Activated CD4-positive, alpha-beta memory T cell treated with anti-CD3 and anti-CD28 coated beads for 36 hours (primary cell): ENCODE measurements at regions of chrX and their contacts with region 1.

Region 1: DNA sequence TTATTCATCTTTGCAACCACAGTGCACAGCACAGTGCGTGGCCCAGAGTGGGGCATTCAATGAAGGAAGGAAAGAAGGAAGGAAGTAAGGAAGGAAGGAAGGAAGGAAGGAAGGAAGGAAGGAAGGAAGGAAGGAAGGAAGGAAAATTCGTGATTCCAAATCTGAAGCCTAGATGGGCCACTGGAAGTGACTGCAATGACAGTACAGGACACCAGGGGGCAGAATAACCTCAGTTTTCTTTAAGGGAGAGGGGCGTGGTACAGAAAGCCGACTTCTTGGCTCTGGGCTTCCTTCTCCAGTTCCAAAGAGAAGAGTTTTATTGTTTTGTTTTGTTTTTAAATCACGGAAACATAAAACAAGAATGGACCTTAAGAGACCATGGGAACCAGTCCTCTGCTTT is 47.8 kb downstream of the APLN start:
- DNase-seq: peak; percentile 55
- H3K4me3 Mint-ChIP-seq: no peak overlapping the region
- H3K27ac Mint-ChIP-seq: no peak overlapping the region
- H3K4me1 Mint-ChIP-seq: peaks cover 15% of the 10 kb centered on the region
- H3K27me3 Mint-ChIP-seq: no peaks in the 10 kb centered on the region

Region 2: GRCh38 chrX:129622757-129623341 is 15.9 kb after region 1 on chrX:
- CTCF ChIA-PET with region 1: no interaction called
- POLR2A ChIA-PET with region 1: no interaction called
- intact Hi-C with region 1: no loop called
- DNase-seq: no peak
- H3K4me3 Mint-ChIP-seq: no peak overlapping the region
- H3K27ac Mint-ChIP-seq: no peak overlapping the region
- H3K4me1 Mint-ChIP-seq: peaks cover 3% of the 10 kb centered on the region
- H3K27me3 Mint-ChIP-seq: no peaks in the 10 kb centered on the region

Region 3: DNA sequence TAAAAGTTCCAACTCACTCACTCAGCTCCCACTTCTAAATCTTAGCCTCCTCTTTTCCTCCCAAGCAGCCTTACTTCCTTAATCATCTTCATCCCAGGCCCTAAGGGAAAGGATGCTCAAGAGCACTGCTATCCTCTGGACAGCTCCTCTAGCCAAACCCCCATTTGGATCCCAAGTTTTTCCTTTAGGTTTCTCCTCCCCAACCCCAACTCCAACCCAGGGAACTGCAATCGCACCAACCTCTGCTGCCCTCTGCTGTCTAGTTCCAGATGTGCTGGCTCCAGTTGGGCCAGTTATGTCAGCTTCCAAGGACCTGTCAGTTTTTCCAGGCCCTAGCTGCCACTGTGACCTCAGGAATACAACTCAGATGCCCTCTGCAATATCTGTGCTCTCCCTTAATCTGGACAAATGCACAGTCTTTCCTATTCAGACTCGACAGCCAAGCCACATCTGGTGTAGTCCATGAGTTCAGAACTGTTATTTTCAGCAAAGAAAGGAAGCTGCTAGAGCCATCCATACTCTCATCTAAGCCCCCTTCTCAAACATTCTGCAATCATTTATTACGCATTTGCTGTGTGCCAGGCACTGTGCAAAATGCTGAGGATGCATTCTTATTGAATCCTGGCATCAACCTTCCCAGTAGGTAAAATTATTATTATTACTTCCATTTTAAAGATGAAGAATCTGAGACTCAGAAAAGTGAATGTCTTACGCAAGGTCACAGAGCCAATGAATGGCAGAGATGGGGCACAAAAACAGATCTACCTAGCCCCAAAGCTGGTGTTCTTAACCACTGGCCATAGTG is 119.6 kb after region 1 on chrX:
- CTCF ChIA-PET with region 1: interaction called, 12 read pairs
- POLR2A ChIA-PET with region 1: no interaction called
- intact Hi-C with region 1: loop called (anchors 1 kb)
- DNase-seq: peak; percentile 52
- H3K4me3 Mint-ChIP-seq: no peak overlapping the region
- H3K27ac Mint-ChIP-seq: no peak overlapping the region
- H3K4me1 Mint-ChIP-seq: peaks cover 31% of the 10 kb centered on the region
- H3K27me3 Mint-ChIP-seq: no peaks in the 10 kb centered on the region

Region 4: GRCh38 chrX:129823115-129823514 is 216.2 kb after region 1 on chrX:
- CTCF ChIA-PET with region 1: interaction called, 4 read pairs
- POLR2A ChIA-PET with region 1: no interaction called
- intact Hi-C with region 1: loop called (anchors 10 kb)
- DNase-seq: peak; percentile 46
- H3K4me3 Mint-ChIP-seq: no peak overlapping the region
- H3K27ac Mint-ChIP-seq: peak overlapping the region; percentile 81
- H3K4me1 Mint-ChIP-seq: peaks cover 16% of the 10 kb centered on the region
- H3K27me3 Mint-ChIP-seq: no peaks in the 10 kb centered on the region

Region 5: DNA sequence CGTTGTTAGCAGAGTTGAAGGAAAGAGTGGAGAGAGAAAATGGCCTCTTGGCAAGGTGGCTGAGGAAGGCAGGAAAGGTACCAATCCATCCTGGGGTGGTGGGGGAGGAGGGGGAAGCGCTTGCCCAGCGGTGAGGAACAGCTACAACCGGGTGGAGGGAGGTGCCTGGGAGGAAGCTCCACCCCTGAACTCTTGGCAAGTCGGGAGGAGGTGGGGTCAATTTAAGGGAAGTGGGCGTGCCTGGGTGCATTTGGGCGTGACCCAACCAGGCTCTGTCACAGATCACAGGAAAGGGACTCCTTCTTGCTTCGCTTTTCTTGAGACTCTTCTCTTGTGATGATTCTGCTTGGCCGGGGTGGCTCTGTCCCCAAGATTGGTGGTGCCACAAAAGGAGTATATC is 417.2 kb after region 1 on chrX:
- CTCF ChIA-PET with region 1: interaction called, 12 read pairs
- POLR2A ChIA-PET with region 1: no interaction called
- intact Hi-C with region 1: no loop called
- DNase-seq: peak; percentile 89
- H3K4me3 Mint-ChIP-seq: no peak overlapping the region
- H3K27ac Mint-ChIP-seq: peak overlapping the region; percentile 47
- H3K4me1 Mint-ChIP-seq: peaks cover 10% of the 10 kb centered on the region
- H3K27me3 Mint-ChIP-seq: no peaks in the 10 kb centered on the region

Region 6: DNA sequence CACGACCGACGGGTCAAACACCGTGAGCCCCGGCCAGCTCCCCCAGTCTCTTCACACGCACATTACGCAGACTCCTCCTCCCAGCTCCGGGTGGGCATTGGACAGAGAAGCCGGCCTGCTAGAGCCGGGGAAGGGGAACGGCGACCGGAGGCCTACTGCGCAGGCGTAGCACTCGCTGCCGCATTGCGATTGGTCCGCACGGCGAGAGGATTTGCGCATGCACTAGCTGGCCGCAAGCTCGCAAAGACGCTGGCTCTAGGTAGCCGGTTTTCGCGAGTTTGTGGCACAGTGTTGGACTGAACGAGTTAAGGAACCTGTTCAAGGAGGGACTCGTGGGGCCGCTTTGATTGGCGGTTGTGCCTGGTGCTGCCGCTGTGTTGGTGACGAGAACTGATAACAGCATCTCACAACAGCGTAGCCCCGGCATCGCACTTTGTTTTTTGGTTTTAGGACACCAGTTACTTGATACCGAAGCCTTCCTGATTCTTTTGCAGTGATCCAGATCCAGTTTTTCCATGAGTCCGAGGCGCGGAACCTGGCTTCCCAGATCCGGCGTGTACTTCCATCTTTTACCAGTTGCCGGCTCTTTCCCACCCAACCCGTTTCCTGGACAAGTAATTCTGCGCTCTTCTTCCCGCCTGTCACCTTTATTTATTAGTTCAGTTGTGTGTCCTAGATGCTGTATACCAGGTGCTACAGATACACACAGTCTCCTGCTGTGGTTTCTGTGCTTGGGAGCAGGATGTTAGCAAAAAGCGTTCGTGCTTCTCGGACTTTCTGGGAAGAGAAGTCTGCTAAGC is 559.0 kb after region 1 on chrX and contains the start of gene AIFM1:
- CTCF ChIA-PET with region 1: no interaction called
- POLR2A ChIA-PET with region 1: no interaction called
- intact Hi-C with region 1: loop called (anchors 10 kb)
- DNase-seq: peak; percentile 93
- H3K4me3 Mint-ChIP-seq: peak within 1 kb of the TSS; percentile 84
- H3K27ac Mint-ChIP-seq: peak within 1 kb of the TSS; percentile 95
- H3K4me1 Mint-ChIP-seq: peaks cover 34% of the 10 kb centered on the region
- H3K27me3 Mint-ChIP-seq: no peaks in the 10 kb centered on the region
- total RNA-seq, gene AIFM1: 60.9 to 61.2 TPM